CD4-positive, alpha-beta T cell (primary cell): ENCODE measurements at regions of chr18 and their contacts with region 1.

Region 1: DNA sequence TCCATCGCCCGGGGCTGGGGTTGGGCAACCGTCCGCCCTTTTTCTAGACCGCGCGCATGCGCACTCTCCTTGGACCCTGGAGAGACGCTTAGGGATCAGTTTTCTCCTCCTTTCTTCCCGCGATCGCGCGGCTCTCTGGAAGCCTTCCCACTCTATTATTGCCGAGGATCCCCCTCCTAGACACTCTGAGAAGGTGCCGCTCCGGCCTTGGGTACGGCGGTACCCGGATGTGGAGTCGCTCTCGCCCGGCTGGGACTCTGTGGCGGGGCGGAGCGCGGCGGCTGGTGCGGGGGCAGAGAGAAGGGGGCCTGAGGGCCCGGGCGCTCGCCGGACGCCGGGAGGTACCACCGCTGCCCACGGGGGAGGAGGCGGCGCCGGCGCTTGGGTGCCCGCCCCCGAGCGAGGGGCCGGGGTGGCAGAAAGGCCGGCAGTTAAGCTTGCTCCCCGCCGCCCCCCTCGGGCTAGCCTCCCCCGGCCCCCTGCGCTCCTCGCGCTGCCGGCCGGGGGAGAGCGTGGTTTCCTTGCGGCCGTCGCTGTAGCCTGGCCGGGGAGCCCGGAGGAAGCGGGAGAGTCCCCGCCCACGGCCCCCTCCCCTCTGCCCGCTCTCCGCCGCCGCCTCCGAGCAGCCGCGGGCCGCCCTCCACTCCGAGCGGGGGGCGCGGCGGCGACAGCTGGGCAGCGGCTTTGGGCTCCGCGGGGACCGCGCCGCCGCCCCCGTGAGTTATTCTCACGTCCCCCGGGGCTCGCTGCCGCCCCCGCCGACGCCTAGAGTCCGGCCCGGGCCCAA is at the start of gene MIB1:
- DNase-seq: peak in 11 of 14 experiments; percentile 25 to 99 (median 76)
- ATAC-seq: peak; percentile 57
- H3K4me3 ChIP-seq: peak within 1 kb of the TSS; percentile 94
- H3K4me3 Mint-ChIP-seq: peak within 1 kb of the TSS; percentile 98
- H3K27ac ChIP-seq: peak within 1 kb of the TSS; percentile 87 to 95
- H3K27ac Mint-ChIP-seq: peak within 1 kb of the TSS; percentile 93
- H3K4me1 ChIP-seq: peaks cover 34% of the 10 kb centered on the region
- H3K4me1 Mint-ChIP-seq: peaks cover 44% of the 10 kb centered on the region
- H3K27me3 ChIP-seq: no peaks in the 10 kb centered on the region
- H3K27me3 Mint-ChIP-seq: no peaks in the 10 kb centered on the region
- CTCF ChIP-seq: no peak
- total RNA-seq, gene MIB1: 13.6 to 15.3 TPM

Region 2: GRCh38 chr18:21632393-21632792 is 108.5 kb before region 1 on chr18:
- CTCF ChIA-PET with region 1: no interaction called
- POLR2A ChIA-PET with region 1: no interaction called
- intact Hi-C with region 1: no loop called
- DNase-seq: peak in 1 of 14 experiments; percentile 8
- ATAC-seq: no peak
- H3K4me3 ChIP-seq: no peak overlapping the region
- H3K4me3 Mint-ChIP-seq: no peak overlapping the region
- H3K27ac ChIP-seq: no peak overlapping the region
- H3K27ac Mint-ChIP-seq: peak overlapping the region; percentile 27
- H3K4me1 ChIP-seq: peaks cover 5% of the 10 kb centered on the region
- H3K4me1 Mint-ChIP-seq: peaks cover 17% of the 10 kb centered on the region
- H3K27me3 ChIP-seq: no peaks in the 10 kb centered on the region
- H3K27me3 Mint-ChIP-seq: no peaks in the 10 kb centered on the region
- CTCF ChIP-seq: no peak

Region 3: GRCh38 chr18:21682371-21683051 is 58.4 kb before region 1 on chr18:
- CTCF ChIA-PET with region 1: no interaction called
- POLR2A ChIA-PET with region 1: interaction called, 9 read pairs
- intact Hi-C with region 1: loop called in 1 of 2 experiments (anchors 10 kb)
- DNase-seq: peak in 8 of 14 experiments; percentile 2 to 73 (median 28)
- ATAC-seq: peak; percentile 87
- H3K4me3 ChIP-seq: peak overlapping the region; percentile 57
- H3K4me3 Mint-ChIP-seq: no peak overlapping the region
- H3K27ac ChIP-seq: peak overlapping the region; percentile 47 to 87
- H3K27ac Mint-ChIP-seq: no peak overlapping the region
- H3K4me1 ChIP-seq: peaks cover 14% of the 10 kb centered on the region
- H3K4me1 Mint-ChIP-seq: peaks cover 28% of the 10 kb centered on the region
- H3K27me3 ChIP-seq: no peaks in the 10 kb centered on the region
- H3K27me3 Mint-ChIP-seq: no peaks in the 10 kb centered on the region
- CTCF ChIP-seq: no peak

Region 4: GRCh38 chr18:22348521-22349316 is 607.8 kb after region 1 on chr18:
- CTCF ChIA-PET with region 1: no interaction called
- POLR2A ChIA-PET with region 1: no interaction called
- intact Hi-C with region 1: no loop called
- DNase-seq: peak in 1 of 14 experiments; percentile 20
- ATAC-seq: no peak
- H3K4me3 ChIP-seq: peak overlapping the region; percentile 60
- H3K4me3 Mint-ChIP-seq: peak overlapping the region; percentile 70
- H3K27ac ChIP-seq: peak overlapping the region in 1 of 2 donors; percentile 29
- H3K27ac Mint-ChIP-seq: peak overlapping the region; percentile 44
- H3K4me1 ChIP-seq: peaks cover 18% of the 10 kb centered on the region
- H3K4me1 Mint-ChIP-seq: peaks cover 12% of the 10 kb centered on the region
- H3K27me3 ChIP-seq: peaks cover 19 to 34% of the 10 kb centered on the region in 2 experiments
- H3K27me3 Mint-ChIP-seq: peaks cover 65% of the 10 kb centered on the region
- CTCF ChIP-seq: no peak

Region 5: DNA sequence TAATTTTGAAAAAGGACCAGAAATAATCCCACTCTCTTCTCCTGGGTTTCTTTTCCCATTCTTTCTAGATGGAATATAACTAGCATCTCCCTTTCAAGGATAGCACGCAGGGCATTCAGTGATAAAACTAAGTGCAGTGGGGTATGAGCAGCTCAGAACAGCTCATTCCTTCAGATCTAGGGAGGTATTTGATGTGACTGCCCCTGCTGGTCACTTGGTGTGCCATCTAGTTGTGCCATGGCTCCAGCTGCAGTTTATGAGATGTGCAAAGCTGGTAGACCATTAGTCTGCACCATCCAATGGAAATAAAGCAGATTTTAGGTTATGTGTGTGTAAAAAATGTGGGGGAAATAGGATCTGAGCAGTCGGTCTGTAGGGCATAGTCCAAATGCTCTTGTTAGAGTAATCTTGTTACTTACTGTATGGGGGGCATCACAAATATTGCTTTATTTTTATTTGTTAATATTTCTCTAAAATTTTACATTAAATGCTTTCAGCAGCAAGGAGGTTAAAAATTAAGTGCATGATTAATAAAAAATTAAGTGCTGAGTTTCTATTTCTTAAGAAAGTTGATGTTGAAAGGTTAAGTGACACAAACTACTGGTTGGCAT is 637.9 kb after region 1 on chr18:
- CTCF ChIA-PET with region 1: no interaction called
- POLR2A ChIA-PET with region 1: no interaction called
- intact Hi-C with region 1: no loop called
- DNase-seq: peak in 4 of 14 experiments; percentile 5 to 44 (median 24)
- ATAC-seq: no peak
- H3K4me3 ChIP-seq: no peak overlapping the region
- H3K4me3 Mint-ChIP-seq: no peak overlapping the region
- H3K27ac ChIP-seq: no peak overlapping the region
- H3K27ac Mint-ChIP-seq: no peak overlapping the region
- H3K4me1 ChIP-seq: no peaks in the 10 kb centered on the region
- H3K4me1 Mint-ChIP-seq: no peaks in the 10 kb centered on the region
- H3K27me3 ChIP-seq: no peaks in the 10 kb centered on the region
- H3K27me3 Mint-ChIP-seq: no peaks in the 10 kb centered on the region
- CTCF ChIP-seq: no peak